MCF 10A (cell line): ENCODE measurements at regions of chr2 and their contacts with region 1.

Region 1: DNA sequence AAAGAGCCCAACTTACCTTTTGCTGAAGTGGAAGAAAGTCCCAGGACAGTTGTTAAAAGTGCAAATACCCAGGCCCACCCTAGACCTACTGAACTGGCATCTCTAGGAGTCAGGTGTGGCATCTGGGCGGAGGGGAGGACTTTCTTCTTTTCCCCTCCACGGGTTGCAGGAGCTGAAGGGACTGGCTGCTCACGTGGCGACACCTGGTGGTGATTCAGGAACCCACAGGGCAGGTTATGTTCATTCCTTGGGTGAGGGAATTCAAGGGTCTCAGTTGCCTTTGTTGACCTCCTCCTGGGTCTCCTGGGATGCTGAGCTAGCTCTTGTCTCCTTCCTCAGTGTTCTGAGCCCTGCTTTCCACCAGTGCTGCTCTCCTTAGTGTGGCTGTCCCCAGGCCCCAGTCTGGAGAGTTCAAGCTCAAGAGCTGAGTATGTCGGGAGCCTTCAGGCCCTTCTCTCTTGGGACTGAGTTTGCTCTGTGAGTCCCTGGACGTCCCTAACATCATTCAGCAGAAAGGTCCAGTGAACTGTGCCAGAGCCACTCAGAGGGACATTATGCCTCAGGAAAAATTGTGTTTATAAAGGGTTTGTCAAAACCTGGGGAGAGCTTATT is 56.9 kb downstream of the DYSF start:
- DNase-seq: peak; percentile 69
- H3K4me3 Mint-ChIP-seq: no peak overlapping the region
- H3K27ac Mint-ChIP-seq: no peak overlapping the region
- H3K4me1 Mint-ChIP-seq: no peaks in the 10 kb centered on the region
- H3K27me3 Mint-ChIP-seq: no peaks in the 10 kb centered on the region
- CTCF ChIP-seq: peak; percentile 89

Region 2: DNA sequence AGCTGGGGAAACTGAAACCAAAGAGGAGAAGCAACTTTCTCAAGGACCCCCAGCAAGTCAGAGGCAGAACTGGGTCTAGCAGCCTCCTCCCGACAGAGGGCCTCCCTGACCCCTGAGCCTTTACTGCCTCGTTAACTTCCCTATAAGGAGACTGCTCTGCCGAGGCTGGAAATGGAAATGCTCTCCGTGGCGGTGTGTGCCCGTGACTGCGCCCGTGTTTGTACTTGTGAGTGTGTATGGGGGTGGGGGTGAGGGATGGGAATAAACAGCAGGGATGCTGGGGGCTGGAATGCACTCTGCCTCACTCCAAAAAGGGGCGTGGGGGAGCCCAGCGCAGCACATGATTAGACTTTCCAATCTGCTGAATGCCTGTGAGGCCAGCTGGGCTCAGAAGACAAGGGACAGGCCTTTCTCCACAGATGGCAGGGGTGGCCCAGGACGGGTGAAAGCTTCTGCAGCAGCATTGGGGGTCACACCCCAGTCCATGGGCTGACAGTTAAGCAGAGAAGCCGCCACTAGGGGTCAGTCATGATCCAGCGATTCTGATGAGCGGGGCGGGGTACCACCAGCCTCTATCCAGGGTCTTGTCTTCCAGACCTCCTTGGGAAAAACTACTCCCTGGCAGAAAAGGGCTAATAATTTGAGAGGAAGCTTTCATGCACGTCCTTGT is 353.0 kb before region 1 on chr2:
- CTCF ChIA-PET with region 1: interaction called, 4 read pairs
- POLR2A ChIA-PET with region 1: no interaction called
- intact Hi-C with region 1: loop called (anchors 1 kb)
- DNase-seq: peak; percentile 60
- H3K4me3 Mint-ChIP-seq: peak overlapping the region; percentile 13
- H3K27ac Mint-ChIP-seq: no peak overlapping the region
- H3K4me1 Mint-ChIP-seq: peaks cover 16% of the 10 kb centered on the region
- H3K27me3 Mint-ChIP-seq: no peaks in the 10 kb centered on the region
- CTCF ChIP-seq: peak; percentile 70

Region 3: DNA sequence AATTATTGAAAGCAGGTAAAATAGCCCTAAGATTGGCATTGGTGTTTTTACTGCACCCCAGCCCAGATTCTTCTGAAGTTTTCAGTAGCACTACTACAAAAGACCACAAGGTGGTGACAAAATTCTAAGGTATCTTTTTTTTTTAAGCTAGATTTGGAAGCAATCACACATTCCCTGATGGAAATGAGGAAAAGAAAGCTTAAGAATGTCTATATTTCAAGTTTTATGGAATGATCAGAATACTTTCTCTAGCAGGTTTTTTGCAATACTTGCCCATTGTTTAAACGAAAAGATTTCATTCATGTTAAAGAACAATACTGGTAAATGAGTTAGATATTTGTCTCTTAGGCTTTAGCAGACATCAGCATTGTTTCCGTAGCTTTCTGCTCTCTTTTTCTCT is 210.8 kb before region 1 on chr2:
- CTCF ChIA-PET with region 1: interaction called, 149 read pairs
- POLR2A ChIA-PET with region 1: interaction called, 10 read pairs
- intact Hi-C with region 1: loop called (anchors 1 kb)
- DNase-seq: peak; percentile 51
- H3K4me3 Mint-ChIP-seq: no peak overlapping the region
- H3K27ac Mint-ChIP-seq: no peak overlapping the region
- H3K4me1 Mint-ChIP-seq: peaks cover 9% of the 10 kb centered on the region
- H3K27me3 Mint-ChIP-seq: no peaks in the 10 kb centered on the region
- CTCF ChIP-seq: peak; percentile 64

Region 4: DNA sequence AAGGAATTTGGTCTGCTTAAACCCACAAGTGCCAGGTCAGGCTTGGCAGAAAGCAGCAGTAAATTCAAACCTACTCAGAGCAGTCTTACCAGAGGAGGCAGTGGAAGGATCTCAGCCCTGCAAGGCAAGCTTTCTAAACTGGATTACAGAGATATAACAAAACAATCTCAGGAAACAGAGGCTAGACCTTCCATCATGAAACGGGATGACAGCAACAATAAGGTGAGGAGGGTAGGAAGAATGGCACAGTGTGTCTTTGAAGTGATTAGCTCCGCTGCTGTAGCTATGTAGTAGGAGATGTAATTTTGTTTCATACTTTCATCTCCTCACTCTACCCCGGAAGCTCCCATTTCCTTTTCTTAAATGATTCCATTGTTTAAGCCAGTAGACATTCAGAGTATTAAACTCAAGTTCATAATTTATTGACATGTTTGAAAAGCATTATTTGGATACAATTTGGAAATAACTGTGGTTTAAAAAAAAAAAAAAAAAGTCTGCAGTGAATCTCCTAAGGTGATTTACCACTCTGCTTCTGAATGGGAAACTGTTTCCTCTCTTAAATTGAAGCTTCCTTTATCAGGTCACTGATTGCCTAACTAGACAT is 86.4 kb before region 1 on chr2:
- CTCF ChIA-PET with region 1: interaction called, 10 read pairs
- POLR2A ChIA-PET with region 1: no interaction called
- intact Hi-C with region 1: no loop called
- DNase-seq: no peak
- H3K4me3 Mint-ChIP-seq: no peak overlapping the region
- H3K27ac Mint-ChIP-seq: no peak overlapping the region
- H3K4me1 Mint-ChIP-seq: peaks cover 10% of the 10 kb centered on the region
- H3K27me3 Mint-ChIP-seq: no peaks in the 10 kb centered on the region
- CTCF ChIP-seq: no peak

Region 5: GRCh38 chr2:71498261-71498701 is 12.0 kb before region 1 on chr2:
- CTCF ChIA-PET with region 1: interaction called, 18 read pairs
- POLR2A ChIA-PET with region 1: no interaction called
- intact Hi-C with region 1: no loop called
- DNase-seq: peak; percentile 55
- H3K4me3 Mint-ChIP-seq: no peak overlapping the region
- H3K27ac Mint-ChIP-seq: peak overlapping the region; percentile 59
- H3K4me1 Mint-ChIP-seq: peaks cover 25% of the 10 kb centered on the region
- H3K27me3 Mint-ChIP-seq: no peaks in the 10 kb centered on the region
- CTCF ChIP-seq: no peak

Region 6: DNA sequence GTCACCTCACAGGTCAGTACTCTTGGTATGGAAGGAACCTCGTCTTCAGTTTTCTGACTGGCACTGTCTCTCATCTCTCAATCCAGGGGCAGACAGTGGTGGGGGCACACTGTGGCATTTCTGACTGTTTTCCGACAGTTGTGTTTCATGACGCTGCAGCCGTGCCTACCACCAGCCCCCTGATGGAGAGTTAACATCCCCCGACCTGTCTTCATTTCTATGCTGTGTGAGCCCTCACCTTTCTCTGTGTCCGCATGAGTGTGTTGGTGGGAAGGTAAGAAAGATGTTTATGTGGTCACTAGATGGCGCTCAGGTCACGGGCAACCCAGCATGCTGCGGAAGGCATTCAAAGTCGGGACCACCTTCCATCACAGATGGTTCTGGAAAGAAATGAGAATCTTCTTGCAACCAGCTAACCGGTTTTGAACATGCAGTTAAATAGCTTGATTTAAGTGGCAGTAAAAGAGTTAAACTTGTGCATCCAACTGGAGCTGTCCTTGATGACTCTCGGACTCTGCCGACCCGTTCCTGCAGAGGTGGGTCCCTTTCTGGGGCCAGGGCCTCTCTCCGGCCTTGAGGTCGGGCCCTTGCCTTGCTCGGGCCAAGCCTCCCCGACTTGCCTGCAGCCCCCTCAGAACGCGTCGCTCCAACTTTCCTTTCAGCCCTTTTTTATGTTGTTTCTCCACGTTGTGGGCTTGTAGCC is 35.4 kb after region 1 on chr2:
- CTCF ChIA-PET with region 1: no interaction called
- POLR2A ChIA-PET with region 1: no interaction called
- intact Hi-C with region 1: no loop called
- DNase-seq: peak; percentile 63
- H3K4me3 Mint-ChIP-seq: no peak overlapping the region
- H3K27ac Mint-ChIP-seq: no peak overlapping the region
- H3K4me1 Mint-ChIP-seq: peaks cover 5% of the 10 kb centered on the region
- H3K27me3 Mint-ChIP-seq: peaks cover 29% of the 10 kb centered on the region
- CTCF ChIP-seq: peak; percentile 83

Region 7: DNA sequence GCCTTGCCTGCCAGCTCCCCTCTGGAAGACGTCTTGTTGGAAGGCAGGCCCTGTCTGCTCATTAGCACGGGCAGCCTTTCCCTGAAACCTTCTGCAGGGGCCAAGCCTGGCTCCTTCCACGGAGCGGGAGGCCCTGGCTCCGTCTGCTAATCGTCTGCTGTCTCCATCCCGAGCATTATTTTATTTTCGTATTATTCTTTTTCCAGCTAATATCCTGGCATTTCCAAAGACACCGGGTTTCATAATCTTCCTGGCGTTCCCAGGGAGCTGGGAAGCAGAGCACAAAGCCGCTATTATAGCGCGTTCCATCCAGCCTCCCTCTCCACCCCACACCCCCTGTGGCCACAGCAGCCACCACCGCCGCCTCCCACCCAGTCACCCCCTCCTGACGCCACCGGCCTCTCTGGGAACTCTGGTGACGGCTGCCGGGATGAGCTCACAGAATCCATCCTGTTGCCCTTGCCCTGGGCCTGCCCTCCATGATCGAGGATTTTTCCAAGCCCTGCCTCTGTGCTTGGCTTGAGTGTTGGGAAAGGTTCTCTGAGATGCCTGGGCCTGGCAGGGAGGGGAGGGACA is 68.6 kb after region 1 on chr2:
- CTCF ChIA-PET with region 1: no interaction called
- POLR2A ChIA-PET with region 1: no interaction called
- intact Hi-C with region 1: no loop called
- DNase-seq: no peak
- H3K4me3 Mint-ChIP-seq: no peak overlapping the region
- H3K27ac Mint-ChIP-seq: no peak overlapping the region
- H3K4me1 Mint-ChIP-seq: no peaks in the 10 kb centered on the region
- H3K27me3 Mint-ChIP-seq: no peaks in the 10 kb centered on the region
- CTCF ChIP-seq: no peak